Endothelial cell of umbilical vein (primary cell): ENCODE measurements at regions of chr11 and their contacts with region 1.

Region 1: GRCh38 chr11:94926698-94927237 is 46.6 kb downstream of the CWC15 start:
- DNase-seq: peak; percentile 94
- H3K4me3 ChIP-seq: no peak overlapping the region
- H3K27ac ChIP-seq: peak overlapping the region; percentile 92
- H3K4me1 ChIP-seq: peaks cover 39% of the 10 kb centered on the region
- H3K27me3 ChIP-seq: no peaks in the 10 kb centered on the region
- CTCF ChIP-seq: no peak
- POLR2A ChIP-seq: peak; percentile 43

Region 2: GRCh38 chr11:94731880-94732601 is 194.7 kb before region 1 on chr11:
- CTCF ChIA-PET with region 1: no interaction called
- POLR2A ChIA-PET with region 1: no interaction called
- dilution Hi-C with region 1: no loop called
- intact Hi-C with region 1: loop called (anchors 1 kb)
- DNase-seq: peak; percentile 38
- H3K4me3 ChIP-seq: no peak overlapping the region
- H3K27ac ChIP-seq: peak overlapping the region; percentile 79
- H3K4me1 ChIP-seq: peaks cover 35% of the 10 kb centered on the region
- H3K27me3 ChIP-seq: no peaks in the 10 kb centered on the region
- CTCF ChIP-seq: no peak
- POLR2A ChIP-seq: no peak

Region 3: DNA sequence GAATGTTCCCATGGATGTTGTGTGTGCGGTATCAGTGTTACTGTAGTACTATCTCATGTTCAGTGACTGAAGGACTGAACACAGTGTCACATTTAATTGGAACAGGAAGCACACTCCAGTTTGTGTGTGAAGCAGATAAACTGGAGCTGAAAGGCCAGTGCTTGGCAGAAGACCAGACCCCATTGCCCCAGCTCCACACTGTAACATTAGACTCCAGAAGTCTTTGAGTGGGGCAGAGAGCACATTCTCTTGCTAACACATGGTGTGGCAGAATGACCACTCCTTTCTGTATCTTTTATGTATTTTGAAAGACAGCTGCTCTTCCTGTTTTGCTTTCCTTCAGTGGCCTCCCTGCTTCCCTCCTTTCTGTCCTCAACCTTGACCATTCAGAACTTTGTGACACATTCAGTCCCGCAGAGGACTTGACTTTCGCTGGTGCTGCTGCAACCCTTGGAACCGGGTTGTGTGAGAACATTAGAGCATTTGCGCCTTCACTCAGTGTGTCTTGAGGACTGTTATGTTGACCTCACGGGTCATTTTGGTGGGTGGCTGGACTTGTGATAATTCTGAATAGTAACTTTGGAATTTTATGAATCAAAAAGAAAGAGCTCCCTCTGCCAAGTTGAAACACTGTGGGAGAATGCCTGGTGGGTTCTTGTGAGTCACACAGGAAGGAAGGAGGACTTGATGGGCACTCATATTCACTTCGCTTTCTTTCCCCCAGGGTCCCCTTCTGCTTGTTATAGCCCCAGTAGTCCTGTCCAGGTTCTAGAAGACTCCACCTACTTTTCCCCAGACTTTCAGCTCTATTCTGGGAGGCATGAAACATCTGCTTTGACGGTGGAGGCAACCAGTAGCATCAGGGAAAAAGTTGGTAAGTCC is 132.2 kb before region 1 on chr11:
- CTCF ChIA-PET with region 1: no interaction called
- POLR2A ChIA-PET with region 1: no interaction called
- dilution Hi-C with region 1: no loop called
- intact Hi-C with region 1: loop called (anchors 2 kb)
- DNase-seq: peak; percentile 93
- H3K4me3 ChIP-seq: peak overlapping the region in 2 of 3 experiments; percentile 4 to 15
- H3K27ac ChIP-seq: peak overlapping the region; percentile 90
- H3K4me1 ChIP-seq: peaks cover 44% of the 10 kb centered on the region
- H3K27me3 ChIP-seq: no peaks in the 10 kb centered on the region
- CTCF ChIP-seq: no peak
- POLR2A ChIP-seq: no peak

Region 4: GRCh38 chr11:94876645-94877442 is 49.9 kb before region 1 on chr11:
- CTCF ChIA-PET with region 1: interaction called, 3 read pairs
- POLR2A ChIA-PET with region 1: no interaction called
- dilution Hi-C with region 1: no loop called
- intact Hi-C with region 1: loop called (anchors 2 kb)
- DNase-seq: peak; percentile 94
- H3K4me3 ChIP-seq: no peak overlapping the region
- H3K27ac ChIP-seq: peak overlapping the region; percentile 75
- H3K4me1 ChIP-seq: peaks cover 14% of the 10 kb centered on the region
- H3K27me3 ChIP-seq: no peaks in the 10 kb centered on the region
- CTCF ChIP-seq: peak; percentile 28 to 32
- POLR2A ChIP-seq: no peak

Region 5: GRCh38 chr11:94910779-94911178 is 16.0 kb before region 1 on chr11:
- CTCF ChIA-PET with region 1: interaction called, 4 read pairs
- POLR2A ChIA-PET with region 1: no interaction called
- dilution Hi-C with region 1: no loop called
- intact Hi-C with region 1: loop called (anchors 1 kb)
- DNase-seq: peak; percentile 44
- H3K4me3 ChIP-seq: no peak overlapping the region
- H3K27ac ChIP-seq: no peak overlapping the region
- H3K4me1 ChIP-seq: no peaks in the 10 kb centered on the region
- H3K27me3 ChIP-seq: no peaks in the 10 kb centered on the region
- CTCF ChIP-seq: no peak
- POLR2A ChIP-seq: no peak